Activated CD4-positive, alpha-beta T cell treated with anti-CD3 and anti-CD28 coated beads, Interleukin-2, amount 10 ng/mL, durations not matched to agents 24 days and 14 days (primary cell): ENCODE measurements at regions of chr7 and their contacts with region 1.

Region 1: GRCh38 chr7:74173866-74174605 is at the start of gene EIF4H:
- DNase-seq: peak; percentile 99
- H3K4me3 Mint-ChIP-seq: peak within 1 kb of the TSS; percentile 91
- H3K27ac Mint-ChIP-seq: peak within 1 kb of the TSS; percentile 94
- H3K4me1 Mint-ChIP-seq: peaks cover 39% of the 10 kb centered on the region
- H3K27me3 Mint-ChIP-seq: no peaks in the 10 kb centered on the region
- total RNA-seq, gene EIF4H: 384 and 389 TPM in 2 replicates

Region 2: DNA sequence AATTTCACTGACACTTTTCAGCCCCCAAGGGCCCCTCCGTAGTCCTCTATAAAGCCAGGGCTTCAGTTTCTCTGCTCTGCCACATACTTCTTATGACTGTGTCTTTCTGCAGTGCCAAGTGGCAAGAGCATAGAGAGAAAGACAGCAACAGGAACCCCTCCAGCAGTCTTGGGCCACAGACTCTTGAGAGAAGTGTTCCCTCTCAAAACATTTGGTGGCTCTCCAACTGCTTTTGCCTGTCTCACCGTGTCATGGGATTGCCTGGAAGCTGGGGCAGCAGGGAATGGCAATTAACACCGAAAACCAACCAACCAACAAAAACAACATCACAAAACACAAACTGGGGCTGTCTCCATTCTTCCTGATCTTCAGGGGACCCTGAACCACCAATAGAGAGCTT is 219.9 kb before region 1 on chr7:
- intact Hi-C with region 1: no loop called
- DNase-seq: no peak
- H3K4me3 Mint-ChIP-seq: no peak overlapping the region
- H3K27ac Mint-ChIP-seq: no peak overlapping the region
- H3K4me1 Mint-ChIP-seq: no peaks in the 10 kb centered on the region
- H3K27me3 Mint-ChIP-seq: peaks cover 2% of the 10 kb centered on the region

Region 3: GRCh38 chr7:74068393-74069085 is 105.5 kb before region 1 on chr7:
- intact Hi-C with region 1: loop called (anchors 2 kb)
- DNase-seq: no peak
- H3K4me3 Mint-ChIP-seq: no peak overlapping the region
- H3K27ac Mint-ChIP-seq: peak overlapping the region; percentile 5
- H3K4me1 Mint-ChIP-seq: peaks cover 7% of the 10 kb centered on the region
- H3K27me3 Mint-ChIP-seq: no peaks in the 10 kb centered on the region

Region 4: GRCh38 chr7:74094224-74095101 is 79.6 kb before region 1 on chr7:
- intact Hi-C with region 1: loop called (anchors 1 kb)
- DNase-seq: peak; percentile 91
- H3K4me3 Mint-ChIP-seq: peak overlapping the region; percentile 87
- H3K27ac Mint-ChIP-seq: peak overlapping the region; percentile 97
- H3K4me1 Mint-ChIP-seq: peaks cover 25% of the 10 kb centered on the region
- H3K27me3 Mint-ChIP-seq: no peaks in the 10 kb centered on the region

Region 5: GRCh38 chr7:74254129-74254857 is 80.3 kb after region 1 on chr7 and contains the start of gene RFC2:
- intact Hi-C with region 1: loop called (anchors 1 kb)
- DNase-seq: peak; percentile 100
- H3K4me3 Mint-ChIP-seq: peak within 1 kb of the TSS; percentile 98
- H3K27ac Mint-ChIP-seq: peak within 1 kb of the TSS; percentile 96
- H3K4me1 Mint-ChIP-seq: peaks cover 23% of the 10 kb centered on the region
- H3K27me3 Mint-ChIP-seq: no peaks in the 10 kb centered on the region
- total RNA-seq, gene RFC2: 88.0 and 94.7 TPM in 2 replicates

Region 6: DNA sequence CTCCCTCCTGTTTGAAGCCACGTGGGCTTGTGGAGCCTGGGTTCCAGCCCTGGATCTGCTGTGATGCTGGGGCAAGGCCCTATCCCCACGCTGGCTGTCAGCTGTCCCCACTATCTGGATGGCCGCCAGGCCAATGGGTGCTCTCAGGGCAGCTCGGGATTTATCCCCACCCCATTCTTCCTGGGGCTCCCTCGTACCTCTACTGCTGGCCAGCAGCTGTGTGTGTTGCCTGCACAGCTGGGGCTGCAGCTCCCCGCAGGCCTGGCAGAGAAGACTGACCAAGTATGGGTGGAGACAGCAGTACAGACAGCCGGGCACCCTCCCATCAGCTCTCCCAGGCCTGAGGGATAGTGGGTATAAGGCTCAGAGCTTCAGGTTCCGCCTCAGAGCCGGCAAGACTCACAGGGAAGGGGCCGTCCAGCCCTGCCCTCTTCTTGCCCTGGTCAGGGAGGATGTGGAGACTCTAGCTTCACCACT is 128.7 kb after region 1 on chr7:
- intact Hi-C with region 1: no loop called
- DNase-seq: no peak
- H3K4me3 Mint-ChIP-seq: no peak overlapping the region
- H3K27ac Mint-ChIP-seq: no peak overlapping the region
- H3K4me1 Mint-ChIP-seq: peaks cover 8% of the 10 kb centered on the region
- H3K27me3 Mint-ChIP-seq: peaks cover 13% of the 10 kb centered on the region